Mucosa of descending colon (tissue), 3 donors: ENCODE measurements at regions of chr10 and their contacts with region 1.

Region 1: DNA sequence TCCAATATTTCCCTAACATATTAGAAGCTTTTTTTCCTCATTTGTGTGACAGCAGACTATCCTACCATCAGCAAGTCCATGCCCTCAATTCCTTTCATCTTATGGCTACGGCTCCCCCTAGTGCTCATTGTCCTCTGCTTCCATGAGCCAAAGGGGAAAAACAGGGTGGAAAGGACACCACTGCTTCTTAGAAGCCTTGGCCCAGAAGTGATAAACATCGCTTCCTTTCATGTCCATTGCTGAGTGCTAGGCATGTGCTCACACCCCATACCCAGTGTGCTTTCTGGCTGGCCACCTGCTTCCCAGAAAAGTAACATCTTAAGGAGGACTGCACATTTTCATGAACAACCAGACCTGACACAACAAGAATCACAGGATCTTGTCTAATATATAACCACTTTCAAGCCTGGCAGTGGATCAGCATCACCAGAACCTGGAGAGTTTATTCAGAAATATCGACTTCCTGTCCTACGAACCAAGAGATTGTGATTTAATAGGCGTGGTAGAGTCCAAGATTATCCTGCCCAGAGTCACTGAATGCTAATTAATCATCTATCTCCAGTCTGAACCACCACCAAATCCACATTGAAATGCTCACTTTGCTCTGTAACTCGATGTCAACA is 650.5 kb upstream of the SORCS1 start:
- DNase-seq: peak in 2 of 3 donors; percentile 43 to 91
- ATAC-seq: peak; percentile 87
- H3K4me3 ChIP-seq: no peak overlapping the region
- H3K4me1 ChIP-seq: no peaks in the 10 kb centered on the region
- CTCF ChIP-seq: peak; percentile 55

Region 2: DNA sequence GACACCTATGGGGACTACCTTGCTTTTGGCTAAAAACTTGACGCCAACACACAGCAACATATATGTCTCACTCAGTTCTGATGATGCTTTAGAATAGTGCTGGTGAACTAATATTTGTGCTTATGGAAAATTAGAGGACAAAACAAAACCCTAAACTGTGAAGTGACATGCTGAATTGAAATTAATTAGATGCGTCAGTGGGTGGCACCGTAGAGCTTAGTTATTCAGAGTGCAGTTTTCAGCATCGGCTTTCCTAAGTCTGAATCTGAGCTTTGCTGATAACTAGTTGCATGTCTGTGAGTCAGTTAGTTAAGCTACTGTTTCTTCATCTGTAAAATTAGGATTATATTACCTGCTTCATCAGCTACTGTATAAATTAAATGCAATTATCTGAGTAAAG is 405.5 kb before region 1 on chr10:
- intact Hi-C with region 1: loop called in 1 of 2 experiments (anchors 2 kb)
- DNase-seq: peak in 1 of 3 donors; percentile 57
- ATAC-seq: peak; percentile 51
- H3K4me3 ChIP-seq: no peak overlapping the region
- H3K4me1 ChIP-seq: no peaks in the 10 kb centered on the region
- CTCF ChIP-seq: peak; percentile 29

Region 3: DNA sequence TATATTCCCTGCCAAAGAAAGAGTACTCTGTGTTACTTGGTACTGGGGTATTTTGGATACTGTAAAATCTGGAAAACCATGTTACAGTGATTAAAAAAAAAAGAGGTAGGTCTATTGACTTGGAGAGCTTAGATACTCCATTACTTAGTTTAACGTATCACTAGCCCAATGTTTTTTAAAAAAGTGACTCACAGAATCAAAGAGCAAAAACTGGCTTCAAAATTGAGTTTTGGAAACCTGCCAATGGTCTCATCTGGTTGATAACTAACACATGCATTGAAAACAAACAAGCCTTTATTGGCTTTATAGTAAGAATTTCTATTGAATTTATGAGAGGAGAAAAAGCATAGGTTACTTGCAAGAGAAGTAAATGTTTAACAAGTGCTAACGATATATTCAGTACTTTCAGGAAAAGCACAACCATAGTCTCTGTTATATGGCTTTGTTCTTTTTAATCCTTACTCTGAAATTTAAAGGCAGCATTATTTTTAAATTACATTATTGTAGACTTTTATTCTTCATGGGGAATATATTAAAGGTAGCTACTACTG is 87.1 kb before region 1 on chr10:
- intact Hi-C with region 1: no loop called
- DNase-seq: peak in 1 of 3 donors; percentile 51
- ATAC-seq: peak; percentile 85
- H3K4me3 ChIP-seq: no peak overlapping the region
- H3K4me1 ChIP-seq: peaks cover 13% of the 10 kb centered on the region
- CTCF ChIP-seq: no peak

Region 4: DNA sequence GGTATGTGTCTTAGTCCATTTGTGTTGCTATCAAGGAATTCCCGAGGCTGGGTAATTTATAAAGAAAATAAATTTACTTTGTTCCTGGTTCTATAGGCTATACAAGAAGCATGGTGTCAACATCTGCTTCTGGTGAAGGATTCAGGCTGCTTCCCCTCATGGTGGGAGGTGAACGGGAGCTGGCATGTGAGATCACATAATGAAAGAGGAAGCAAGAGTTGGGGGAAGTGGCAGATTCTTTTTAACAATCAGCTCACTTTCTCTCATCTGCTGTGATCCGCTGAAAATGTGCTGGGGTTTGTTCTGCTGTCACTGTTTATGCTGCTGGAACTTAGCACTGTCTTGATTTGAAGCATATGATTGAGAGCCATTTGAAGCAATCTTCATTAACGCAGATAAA is 79.5 kb after region 1 on chr10:
- intact Hi-C with region 1: no loop called
- DNase-seq: no peak
- ATAC-seq: no peak
- H3K4me3 ChIP-seq: no peak overlapping the region
- H3K4me1 ChIP-seq: no peaks in the 10 kb centered on the region
- CTCF ChIP-seq: no peak

Region 5: DNA sequence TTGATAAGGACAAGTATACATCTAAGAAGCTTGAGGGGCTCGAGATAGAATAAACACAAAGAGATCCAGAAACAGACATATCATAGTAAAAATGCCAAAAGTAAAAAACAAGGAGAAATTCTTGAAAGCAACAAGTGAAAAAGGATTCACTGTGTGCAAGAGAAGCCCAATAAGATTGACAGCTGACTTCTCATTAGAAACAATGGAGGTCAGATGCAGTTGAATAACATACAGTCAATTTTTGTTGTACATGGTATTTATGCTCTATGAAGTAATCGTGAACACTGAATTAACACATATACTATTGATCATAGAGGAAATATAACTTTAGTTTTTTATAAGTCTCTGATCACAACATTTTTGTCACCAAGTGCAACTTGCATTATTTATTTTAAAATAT is 332.4 kb after region 1 on chr10:
- intact Hi-C with region 1: no loop called
- DNase-seq: no peak
- ATAC-seq: no peak
- H3K4me3 ChIP-seq: no peak overlapping the region
- H3K4me1 ChIP-seq: no peaks in the 10 kb centered on the region
- CTCF ChIP-seq: no peak

Region 6: DNA sequence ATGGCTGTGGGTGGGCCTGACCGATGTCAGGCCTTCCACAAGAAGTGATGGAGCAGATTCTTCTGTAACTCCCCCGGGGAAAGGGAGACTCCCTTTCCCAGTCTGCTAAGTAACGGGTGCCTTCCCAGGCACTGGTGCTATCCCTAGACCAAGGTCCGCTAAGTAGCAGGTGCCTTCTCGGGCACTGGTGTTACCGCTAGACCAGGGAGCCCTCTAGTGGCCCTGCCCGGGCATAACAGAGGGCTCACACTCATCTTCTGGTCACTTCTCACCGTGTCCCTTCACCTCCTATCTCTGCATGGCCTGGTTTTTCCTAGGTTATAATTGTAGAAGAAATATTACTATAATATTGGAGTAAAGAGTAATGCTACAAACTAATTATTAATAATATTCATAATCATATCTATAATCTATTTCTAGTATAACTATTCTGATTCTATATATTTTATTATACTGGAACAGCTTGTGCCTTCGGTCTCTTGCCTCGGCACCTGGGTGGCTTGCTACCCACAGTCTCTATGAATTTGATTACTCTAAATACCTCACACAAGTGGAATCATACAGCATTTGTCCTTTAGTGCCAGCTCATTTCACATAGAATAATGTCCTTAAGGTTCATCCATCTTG is 729.6 kb after region 1 on chr10:
- intact Hi-C with region 1: no loop called
- DNase-seq: peak; percentile 52 to 78 (median 73)
- ATAC-seq: peak; percentile 76
- H3K4me3 ChIP-seq: no peak overlapping the region
- H3K4me1 ChIP-seq: no peaks in the 10 kb centered on the region
- CTCF ChIP-seq: peak; percentile 72